RWPE1 (cell line): ENCODE measurements at regions of chr1 and their contacts with region 1.

Region 1: DNA sequence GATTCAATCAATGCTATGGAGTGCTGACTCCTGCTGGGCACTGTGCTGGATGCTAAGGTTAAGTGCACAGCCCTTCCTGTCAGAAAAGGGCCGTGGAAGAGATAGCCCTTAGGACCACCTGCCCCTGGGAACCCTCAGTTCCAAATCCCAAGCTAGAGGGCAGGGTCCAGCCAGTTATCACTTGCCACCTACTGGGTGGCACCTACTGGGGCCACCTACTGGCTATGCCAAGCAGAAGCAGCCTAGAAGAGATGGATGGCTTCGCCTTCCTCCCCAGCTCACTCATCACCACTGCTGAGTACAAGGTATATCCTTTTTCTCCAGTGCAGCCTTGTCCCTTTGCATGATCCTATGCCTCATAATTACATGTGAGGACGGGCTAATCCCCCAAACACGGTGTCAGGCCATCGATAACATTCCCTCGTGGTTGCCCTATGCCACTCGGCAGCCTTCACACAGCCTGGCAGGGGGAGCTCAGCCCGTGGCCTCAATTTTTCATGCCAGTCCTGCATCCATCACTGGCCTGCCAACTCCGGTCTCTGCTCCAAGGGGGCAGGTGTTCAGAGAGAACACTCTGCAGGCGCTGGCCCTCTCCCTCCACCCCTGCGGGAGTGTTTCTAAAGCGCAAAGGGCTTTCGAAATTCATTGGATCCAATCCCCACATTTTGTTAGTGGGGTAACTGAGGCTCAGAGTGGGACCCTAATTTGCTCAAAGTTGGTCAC is 49.0 kb downstream of the SYT2 start:
- DNase-seq: no peak
- H3K27ac ChIP-seq: no peak overlapping the region
- CTCF ChIP-seq: peak; percentile 17; the same call in 1 of the 2 replicates

Region 2: GRCh38 chr1:202643397-202644218 is 17.7 kb before region 1 on chr1:
- CTCF ChIA-PET with region 1: interaction called, 13 read pairs
- POLR2A ChIA-PET with region 1: no interaction called
- DNase-seq: no peak
- H3K27ac ChIP-seq: no peak overlapping the region
- CTCF ChIP-seq: no peak

Region 3: GRCh38 chr1:202781180-202781579 is 119.9 kb after region 1 on chr1:
- CTCF ChIA-PET with region 1: no interaction called
- POLR2A ChIA-PET with region 1: no interaction called
- DNase-seq: no peak
- H3K27ac ChIP-seq: no peak overlapping the region
- CTCF ChIP-seq: no peak